GM12878 (cell line): ENCODE measurements at regions of chr17 and their contacts with region 1.

Region 1: GRCh38 chr17:38584350-38584925 is 21.3 kb downstream of the SRCIN1 start:
- DNase-seq: no peak
- ATAC-seq: peak; percentile 93
- H3K4me3 ChIP-seq: no peak overlapping the region
- H3K27ac ChIP-seq: no peak overlapping the region
- H3K4me1 ChIP-seq: peaks cover 8% of the 10 kb centered on the region
- H3K27me3 ChIP-seq: peaks cover 0 to 4% of the 10 kb centered on the region in 2 experiments; a peak in 3 of 4 replicates
- CTCF ChIP-seq: peak; percentile 88 to 93 (median 91)
- EP300 ChIP-seq: no peak
- POLR2A ChIP-seq: no peak
- RAD21 ChIP-seq: peak; percentile 75

Region 2: GRCh38 chr17:38428112-38428642 is 156.3 kb before region 1 on chr17 and contains the start of gene ARHGAP23:
- CTCF ChIA-PET with region 1: interaction called, 6 read pairs
- POLR2A ChIA-PET with region 1: no interaction called
- RAD21 ChIA-PET with region 1: no interaction called
- SMC1A ChIA-PET with region 1: no interaction called
- in situ Hi-C with region 1: no loop called
- intact Hi-C with region 1: loop called (anchors 10 kb)
- DNase-seq: no peak
- ATAC-seq: peak; percentile 71
- H3K4me3 ChIP-seq: peak within 1 kb of the TSS; percentile 80
- H3K27ac ChIP-seq: no peak within 1 kb of the TSS
- H3K4me1 ChIP-seq: peaks cover 4% of the 10 kb centered on the region
- H3K27me3 ChIP-seq: no peaks in the 10 kb centered on the region; a peak in 1 of 4 replicates
- CTCF ChIP-seq: no peak
- EP300 ChIP-seq: no peak
- POLR2A ChIP-seq: no peak; the same call in 1 of the 2 replicates
- RAD21 ChIP-seq: no peak
- polyA plus RNA-seq, gene ARHGAP23: 0.23 to 0.35 TPM

Region 3: GRCh38 chr17:38628441-38628840 is 44.0 kb after region 1 on chr17:
- CTCF ChIA-PET with region 1: no interaction called
- POLR2A ChIA-PET with region 1: no interaction called
- RAD21 ChIA-PET with region 1: no interaction called
- SMC1A ChIA-PET with region 1: no interaction called
- in situ Hi-C with region 1: no loop called
- intact Hi-C with region 1: no loop called
- DNase-seq: no peak
- ATAC-seq: peak; percentile 49
- H3K4me3 ChIP-seq: no peak overlapping the region
- H3K27ac ChIP-seq: no peak overlapping the region
- H3K4me1 ChIP-seq: peaks cover 6% of the 10 kb centered on the region
- H3K27me3 ChIP-seq: no peaks in the 10 kb centered on the region
- CTCF ChIP-seq: no peak
- EP300 ChIP-seq: no peak
- POLR2A ChIP-seq: no peak
- RAD21 ChIP-seq: no peak

Region 4: DNA sequence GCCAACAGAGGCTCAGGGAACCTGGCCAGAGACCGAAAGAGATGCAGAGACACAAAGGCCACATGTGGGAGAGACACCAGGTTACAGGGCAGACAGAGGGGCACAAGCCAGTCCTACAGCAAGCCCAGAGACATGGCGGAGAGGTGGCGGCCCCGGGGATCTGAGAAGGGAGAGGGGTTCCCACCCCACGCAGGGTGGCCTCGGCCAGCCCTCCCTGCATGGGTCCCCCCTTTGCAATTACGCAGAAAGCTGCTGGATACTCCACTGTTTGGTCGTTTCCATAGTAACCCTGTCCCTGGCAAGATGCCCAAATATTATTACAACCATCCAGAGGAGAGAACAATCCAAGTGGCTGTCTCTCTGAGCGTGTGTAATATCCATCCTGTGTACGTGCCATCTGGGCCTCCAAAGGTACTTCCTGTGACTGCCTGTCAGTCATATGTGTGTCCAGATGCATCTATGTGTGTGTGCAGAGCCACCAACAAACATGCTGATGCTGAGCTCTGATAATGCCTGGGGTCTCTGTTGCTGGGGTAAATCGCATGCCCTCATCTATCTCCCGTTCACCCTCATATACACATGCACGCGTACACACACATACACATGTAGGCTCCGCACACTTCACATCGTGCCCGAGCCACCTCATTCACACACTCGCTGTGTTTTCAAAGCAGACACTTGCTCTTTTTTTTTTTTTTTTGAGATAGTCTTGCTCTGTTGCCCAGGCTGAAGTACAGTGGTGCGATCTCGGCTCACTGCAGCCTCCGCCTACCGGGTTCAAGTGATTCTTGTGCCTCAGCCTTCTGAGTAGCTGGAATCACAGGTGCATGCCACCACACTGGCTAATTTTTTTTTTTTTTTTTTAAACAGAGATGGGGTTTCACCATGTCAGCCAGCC is 158.2 kb after region 1 on chr17:
- CTCF ChIA-PET with region 1: no interaction called
- POLR2A ChIA-PET with region 1: no interaction called
- RAD21 ChIA-PET with region 1: no interaction called
- SMC1A ChIA-PET with region 1: no interaction called
- in situ Hi-C with region 1: no loop called
- intact Hi-C with region 1: no loop called
- DNase-seq: no peak
- ATAC-seq: no peak
- H3K4me3 ChIP-seq: no peak overlapping the region
- H3K27ac ChIP-seq: no peak overlapping the region
- H3K4me1 ChIP-seq: peaks cover 34% of the 10 kb centered on the region
- H3K27me3 ChIP-seq: no peaks in the 10 kb centered on the region
- CTCF ChIP-seq: no peak
- EP300 ChIP-seq: no peak
- POLR2A ChIP-seq: no peak
- RAD21 ChIP-seq: no peak